ENCODE measurements at regions of chr4 and their contacts with region 1.

Region 1: DNA sequence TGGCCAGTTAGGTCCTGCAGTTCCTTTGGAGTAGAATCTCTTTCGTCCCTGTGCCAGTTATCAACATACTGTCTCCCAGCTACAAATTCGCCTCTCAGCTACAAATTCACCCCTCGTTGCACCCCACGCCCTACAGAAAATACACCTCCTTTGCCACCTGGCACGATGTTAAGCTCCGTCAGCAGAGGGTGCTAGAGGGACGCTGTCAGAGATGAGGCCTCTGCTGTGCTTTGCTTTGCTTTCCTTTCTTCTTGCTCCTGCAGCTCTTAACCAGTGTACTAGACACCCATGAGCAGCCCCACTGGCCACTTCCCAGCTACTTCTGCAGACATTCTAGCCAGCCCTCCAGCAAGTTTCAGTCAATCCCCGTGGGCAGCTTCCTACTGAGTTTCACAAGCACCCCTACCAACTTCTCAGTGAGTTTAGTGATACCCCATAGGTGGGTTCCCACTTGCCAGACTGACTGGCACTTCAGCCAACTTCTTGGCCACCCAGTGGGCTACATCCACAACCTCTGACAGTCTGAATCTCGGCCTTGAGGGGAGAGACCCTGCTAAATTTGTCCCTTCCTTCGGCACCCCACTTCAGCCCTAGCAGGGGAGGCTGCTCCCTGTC is 21.8 kb downstream of the HAUS3 start:
- DNase-seq: no peak
- H3K4me3 ChIP-seq: no peak overlapping the region
- H3K27me3 ChIP-seq: peaks cover 2% of the 10 kb centered on the region
- CTCF ChIP-seq: peak; percentile 94

Region 2: GRCh38 chr4:1991596-1992434 is 228.3 kb before region 1 on chr4:
- CTCF ChIA-PET with region 1: no interaction called
- POLR2A ChIA-PET with region 1: no interaction called
- DNase-seq: no peak
- H3K4me3 ChIP-seq: no peak overlapping the region
- H3K27me3 ChIP-seq: no peaks in the 10 kb centered on the region
- CTCF ChIP-seq: no peak

Region 3: GRCh38 chr4:2132438-2132837 is 87.7 kb before region 1 on chr4:
- CTCF ChIA-PET with region 1: no interaction called
- POLR2A ChIA-PET with region 1: no interaction called
- DNase-seq: no peak
- H3K4me3 ChIP-seq: no peak overlapping the region
- H3K27me3 ChIP-seq: no peaks in the 10 kb centered on the region
- CTCF ChIP-seq: no peak

Region 4: GRCh38 chr4:2231082-2231481 is 11.0 kb after region 1 on chr4:
- CTCF ChIA-PET with region 1: interaction called, 42 read pairs
- POLR2A ChIA-PET with region 1: no interaction called
- DNase-seq: no peak
- H3K4me3 ChIP-seq: no peak overlapping the region
- H3K27me3 ChIP-seq: no peaks in the 10 kb centered on the region
- CTCF ChIP-seq: no peak

Region 5: DNA sequence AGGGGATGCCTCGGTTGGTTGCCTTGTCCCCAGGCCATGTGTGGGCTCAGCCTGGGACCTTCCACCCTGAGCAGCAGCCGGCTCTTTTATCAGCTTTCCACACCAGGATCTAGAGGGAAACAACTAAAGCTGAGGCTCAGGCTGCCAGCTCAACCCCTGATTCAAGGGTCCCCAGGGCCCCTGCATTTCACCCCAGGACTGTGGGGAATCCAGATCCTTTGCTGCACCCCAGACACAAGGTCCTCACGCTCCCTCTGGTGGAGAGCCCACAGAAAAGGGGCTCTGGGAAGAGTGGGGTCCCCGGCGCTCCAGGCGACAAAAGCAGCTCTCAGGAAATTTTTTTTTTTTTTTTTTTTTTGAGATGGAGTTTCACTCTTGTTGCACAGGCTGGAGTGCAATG is 134.0 kb after region 1 on chr4:
- CTCF ChIA-PET with region 1: interaction called, 15 read pairs
- POLR2A ChIA-PET with region 1: no interaction called
- DNase-seq: no peak
- H3K4me3 ChIP-seq: no peak overlapping the region
- H3K27me3 ChIP-seq: no peaks in the 10 kb centered on the region
- CTCF ChIP-seq: peak; percentile 49

Region 6: DNA sequence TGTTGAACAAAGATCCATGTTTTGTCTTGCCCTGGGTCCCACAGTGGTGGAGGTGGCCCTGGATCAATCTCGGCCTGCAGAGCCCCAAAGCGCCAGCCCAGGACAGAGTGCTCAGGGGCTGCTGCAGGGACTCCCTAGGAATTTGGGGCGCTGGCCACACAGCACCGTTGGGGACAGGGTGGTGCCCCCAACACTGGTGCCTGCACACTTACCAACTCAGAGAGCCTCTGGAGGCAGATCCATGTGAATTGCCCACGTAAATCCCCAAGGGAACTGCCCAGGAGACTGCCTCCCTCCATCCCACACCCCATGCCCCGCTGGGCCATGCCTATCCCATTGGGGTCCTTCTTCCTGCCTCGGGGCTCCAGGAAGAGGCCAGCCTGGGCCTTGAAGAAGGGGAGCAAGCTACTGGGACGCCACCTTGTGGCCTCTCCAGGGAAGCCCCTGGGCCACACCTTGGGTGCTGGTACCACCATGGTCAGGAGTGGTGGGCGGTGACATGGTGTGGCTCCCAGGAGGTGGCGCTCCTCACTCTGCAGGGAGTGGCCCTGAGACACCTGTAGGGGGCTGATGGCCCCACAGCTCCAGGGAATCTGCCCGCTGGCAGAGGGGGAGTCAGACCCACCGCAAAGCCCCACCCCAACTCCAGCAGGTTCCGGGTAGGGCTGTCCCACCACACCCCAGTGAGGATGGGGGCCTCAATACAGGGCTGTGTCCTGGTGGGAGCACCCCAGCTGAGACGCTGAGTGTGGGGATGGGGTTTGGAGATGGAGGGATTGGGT is 221.5 kb after region 1 on chr4:
- CTCF ChIA-PET with region 1: interaction called, 42 read pairs
- POLR2A ChIA-PET with region 1: no interaction called
- DNase-seq: no peak
- H3K4me3 ChIP-seq: no peak overlapping the region
- H3K27me3 ChIP-seq: no peaks in the 10 kb centered on the region; the same call in 1 of the 2 replicates
- CTCF ChIP-seq: peak; percentile 80

Region 7: GRCh38 chr4:2468445-2469192 is 248.5 kb after region 1 on chr4 and contains the start of gene RNF4:
- CTCF ChIA-PET with region 1: interaction called, 14 read pairs
- POLR2A ChIA-PET with region 1: no interaction called
- DNase-seq: peak; percentile 84
- H3K4me3 ChIP-seq: peak within 1 kb of the TSS; percentile 88
- H3K27me3 ChIP-seq: no peaks in the 10 kb centered on the region
- CTCF ChIP-seq: no peak
- polyA plus RNA-seq, gene RNF4: 89.6 and 107 TPM in 2 replicates

Measured in BJ (cell line).